H1 (cell line): ENCODE measurements at regions of chr10 and their contacts with region 1.

Region 1: GRCh38 chr10:131724891-131725580 is 175.8 kb upstream of the PPP2R2D start:
- DNase-seq: no peak
- H3K4me3 ChIP-seq: no peak overlapping the region
- H3K27ac ChIP-seq: no peak overlapping the region
- H3K4me1 ChIP-seq: peaks cover 0 to 25% (median 10%) of the 10 kb centered on the region in 4 experiments; a peak in 6 of 7 replicates
- H3K27me3 ChIP-seq: peaks cover 0 to 13% (median 9%) of the 10 kb centered on the region in 4 experiments; a peak in 4 of 7 replicates
- CTCF ChIP-seq: no peak
- EP300 ChIP-seq: no peak
- POLR2A ChIP-seq: no peak
- RAD21 ChIP-seq: no peak

Region 2: GRCh38 chr10:131708225-131708880 is 16.7 kb before region 1 on chr10:
- CTCF ChIA-PET with region 1: interaction called, 10 read pairs
- POLR2A ChIA-PET with region 1: interaction called, 3 read pairs
- DNase-seq: no peak
- H3K4me3 ChIP-seq: no peak overlapping the region
- H3K27ac ChIP-seq: no peak overlapping the region
- H3K4me1 ChIP-seq: no peaks in the 10 kb centered on the region; a peak in 1 of 7 replicates
- H3K27me3 ChIP-seq: no peaks in the 10 kb centered on the region
- CTCF ChIP-seq: no peak
- EP300 ChIP-seq: no peak
- POLR2A ChIP-seq: no peak
- RAD21 ChIP-seq: no peak